BJ (cell line): ENCODE measurements at regions of chr14 and their contacts with region 1.

Region 1: DNA sequence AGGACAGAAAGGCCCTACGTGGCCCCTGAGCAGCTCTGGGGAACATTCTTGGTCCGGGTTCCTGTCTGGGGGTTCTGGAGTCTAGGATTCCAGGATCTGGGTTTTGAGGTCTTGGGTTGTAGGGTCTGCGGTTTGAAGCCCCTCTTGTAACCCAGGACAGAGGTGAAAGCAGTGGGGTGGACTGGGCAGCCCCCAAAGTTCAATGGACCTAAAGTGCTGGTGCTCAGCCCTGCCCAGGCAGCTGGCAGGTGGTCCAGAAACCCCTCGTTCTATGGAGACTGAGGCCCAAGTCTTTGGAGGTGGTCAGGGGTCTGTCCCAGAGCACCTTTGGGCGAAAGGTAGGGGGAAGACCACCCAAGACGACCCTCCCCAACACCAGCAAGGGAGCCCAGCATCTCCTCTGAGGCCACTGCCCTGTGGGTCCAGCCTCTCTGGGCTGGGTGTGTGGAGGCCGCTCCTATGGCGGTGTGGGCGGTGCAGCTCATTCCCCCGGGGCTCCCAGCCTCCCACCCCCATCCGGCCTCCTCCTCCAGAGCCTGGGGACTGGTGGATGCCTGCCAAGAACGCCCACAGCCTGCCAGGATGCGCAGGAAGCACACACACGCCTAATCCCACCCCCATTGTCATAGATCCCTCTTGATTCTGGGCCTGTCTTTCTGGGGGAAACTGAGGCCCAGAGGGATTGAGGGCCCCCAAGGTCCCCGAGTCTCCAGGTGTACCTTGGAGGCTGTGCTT is 30.2 kb upstream of the ANKRD9 start:
- DNase-seq: no peak
- H3K4me3 ChIP-seq: no peak overlapping the region
- H3K27me3 ChIP-seq: no peaks in the 10 kb centered on the region
- CTCF ChIP-seq: no peak

Region 2: GRCh38 chr14:102509744-102510615 is 29.8 kb before region 1 on chr14 and contains the start of gene ANKRD9:
- CTCF ChIA-PET with region 1: no interaction called
- POLR2A ChIA-PET with region 1: no interaction called
- DNase-seq: peak; percentile 37
- H3K4me3 ChIP-seq: peak within 1 kb of the TSS; percentile 75
- H3K27me3 ChIP-seq: no peaks in the 10 kb centered on the region
- CTCF ChIP-seq: no peak
- polyA plus RNA-seq, gene ANKRD9: 5.5 and 9.1 TPM in 2 replicates

Region 3: DNA sequence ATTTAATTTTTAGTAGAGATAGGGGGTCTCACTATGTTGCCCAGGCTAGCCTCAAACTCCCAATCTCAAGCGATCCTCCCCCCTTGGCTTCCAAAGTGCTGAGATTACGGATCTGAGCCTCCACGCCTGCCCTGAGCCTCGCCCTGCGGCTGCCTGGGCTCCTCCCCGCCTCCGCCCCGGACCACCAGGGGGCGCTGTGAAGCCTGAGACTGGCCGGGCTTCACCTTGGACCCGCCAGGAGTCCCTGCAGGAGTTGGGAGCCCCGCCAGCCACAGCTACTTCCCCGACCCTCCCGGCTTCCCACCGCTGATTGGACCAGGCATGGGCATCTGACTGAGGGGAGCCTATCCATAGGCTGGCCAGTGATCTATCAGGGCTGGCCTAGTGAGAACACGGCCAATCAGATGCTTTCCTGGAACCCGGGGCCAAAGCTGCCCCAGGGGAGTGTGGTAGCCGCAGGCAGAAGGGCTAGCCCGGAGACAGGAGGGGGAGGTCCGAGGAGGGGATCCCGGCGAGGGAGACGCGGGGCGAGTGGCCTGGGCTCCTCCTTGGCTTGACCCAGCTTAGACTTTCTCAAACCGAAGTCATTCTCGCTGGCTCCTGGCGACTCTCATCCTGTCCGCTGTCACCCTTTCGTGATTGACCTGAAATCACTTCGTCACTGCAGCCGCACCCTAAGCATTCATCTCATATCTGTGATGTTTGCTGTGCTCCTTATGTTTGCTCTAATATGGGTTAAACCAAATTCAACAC is 15.1 kb before region 1 on chr14:
- CTCF ChIA-PET with region 1: interaction called, 12 read pairs
- POLR2A ChIA-PET with region 1: no interaction called
- DNase-seq: peak; percentile 90
- H3K4me3 ChIP-seq: peak overlapping the region; percentile 73
- H3K27me3 ChIP-seq: no peaks in the 10 kb centered on the region
- CTCF ChIP-seq: peak; percentile 99